ENCODE measurements at regions of chr15 and their contacts with region 1.

Region 1: DNA sequence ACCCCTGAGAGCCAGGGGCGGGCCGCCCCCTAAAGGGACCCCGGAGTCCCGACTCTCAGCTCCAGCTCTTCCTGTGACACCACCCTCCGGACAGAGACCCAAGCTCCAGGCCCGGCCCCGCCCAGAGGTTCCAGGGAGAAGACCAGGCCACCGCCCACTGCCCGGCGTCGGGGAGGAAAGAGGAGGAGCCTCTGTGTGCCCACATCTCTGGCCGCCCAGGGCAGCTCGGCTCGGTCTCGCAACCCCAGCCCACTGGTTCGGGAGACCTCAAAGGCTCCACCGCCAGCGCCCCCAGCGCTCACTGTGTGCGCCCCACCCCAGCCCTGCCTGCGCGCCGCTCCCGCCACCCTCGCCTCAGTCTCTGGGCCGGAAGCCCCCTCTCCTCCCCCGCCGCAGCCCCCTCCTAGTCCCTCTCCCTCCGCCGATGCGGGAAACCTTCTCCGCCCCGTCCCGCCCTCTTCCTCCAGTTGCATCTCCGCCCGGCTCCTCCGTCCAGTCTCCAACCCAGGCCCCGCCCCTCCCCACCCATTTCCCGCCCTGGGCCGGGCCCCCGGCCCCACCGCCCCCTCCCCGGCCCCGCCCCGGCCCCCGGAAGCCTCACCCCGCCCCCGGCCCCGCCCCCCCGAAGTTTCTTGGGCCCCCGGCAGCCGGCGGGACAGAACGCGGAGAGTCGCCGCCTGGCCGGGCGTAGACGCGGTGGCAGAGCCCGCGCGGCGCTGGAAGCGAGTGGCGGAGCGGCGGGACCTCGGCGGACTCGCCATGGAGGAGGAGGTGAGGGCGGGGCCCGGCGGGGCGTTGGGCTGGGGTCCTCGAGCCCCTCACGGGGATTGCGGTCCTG is at the start of gene PLEKHO2:
- DNase-seq: peak; percentile 89 to 90
- ATAC-seq: peak; percentile 84 to 85
- H3K4me3 ChIP-seq: peak within 1 kb of the TSS; percentile 66 to 92 (median 80)
- H3K27ac ChIP-seq: peak within 1 kb of the TSS; percentile 84 to 95 (median 89)
- H3K4me1 ChIP-seq: peaks cover 8 to 25% of the 10 kb centered on the region in 2 donors
- H3K27me3 ChIP-seq: no peaks in the 10 kb centered on the region
- CTCF ChIP-seq: no peak
- POLR2A ChIP-seq: peak; percentile 61 to 79
- total RNA-seq, gene PLEKHO2: 2.0 to 5.4 (median 3.3) TPM

Region 2: GRCh38 chr15:64893481-64894394 is 52.3 kb after region 1 on chr15:
- in situ Hi-C with region 1: loop called in 1 of 4 experiments (anchors 10 kb)
- intact Hi-C with region 1: loop called (anchors 5 kb)
- DNase-seq: peak; percentile 77 to 86
- ATAC-seq: peak; percentile 81 to 84
- H3K4me3 ChIP-seq: peak overlapping the region; percentile 40 to 50 (median 48)
- H3K27ac ChIP-seq: peak overlapping the region; percentile 64 to 80 (median 77)
- H3K4me1 ChIP-seq: peaks cover 38 to 42% of the 10 kb centered on the region in 2 donors
- H3K27me3 ChIP-seq: no peaks in the 10 kb centered on the region
- CTCF ChIP-seq: no peak
- POLR2A ChIP-seq: peak; percentile 32 to 50

Region 3: DNA sequence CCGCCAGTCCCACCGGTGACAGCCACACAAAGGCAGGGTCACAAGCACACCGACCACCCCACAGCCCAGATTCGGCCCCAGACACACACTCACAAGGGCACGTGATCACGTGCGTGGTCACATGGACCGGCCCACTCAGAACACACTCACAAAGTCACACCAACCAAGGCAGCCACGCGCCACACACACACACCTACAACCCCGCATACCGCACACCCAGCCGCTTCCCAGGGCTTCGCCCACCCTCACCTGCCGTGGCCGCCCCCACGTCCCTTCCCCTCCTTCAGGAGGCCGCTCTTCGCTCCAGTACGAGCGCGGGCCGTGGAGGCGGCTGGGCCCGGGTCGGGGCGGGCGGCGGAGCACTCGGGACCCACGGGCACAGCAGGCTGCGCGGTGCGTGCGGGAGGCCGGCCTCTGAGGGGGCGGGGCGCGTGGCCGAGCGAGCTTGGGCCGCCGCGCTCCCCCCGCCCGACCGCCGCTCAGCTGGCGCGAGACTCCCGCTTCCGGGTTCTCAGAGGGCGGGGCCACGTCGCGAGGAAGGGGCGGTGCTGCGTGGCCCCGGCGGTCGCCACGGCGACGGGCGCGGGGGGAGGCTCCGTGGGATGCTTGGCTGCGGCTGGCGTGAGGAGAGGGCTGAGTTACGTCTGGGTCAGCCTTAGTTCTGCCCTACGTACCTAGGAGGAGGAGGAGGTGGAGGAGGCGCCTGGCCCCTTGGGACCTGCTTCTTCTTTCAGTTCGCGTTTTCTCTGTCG is 148.1 kb after region 1 on chr15 and contains the start of gene SPG21:
- in situ Hi-C with region 1: no loop called
- intact Hi-C with region 1: loop called (anchors 5 kb)
- DNase-seq: peak; percentile 76 to 82
- ATAC-seq: peak; percentile 89 to 90
- H3K4me3 ChIP-seq: peak within 1 kb of the TSS; percentile 79 to 100 (median 98)
- H3K27ac ChIP-seq: peak within 1 kb of the TSS; percentile 91 to 99 (median 99)
- H3K4me1 ChIP-seq: peaks cover 8 to 22% of the 10 kb centered on the region in 2 donors
- H3K27me3 ChIP-seq: no peaks in the 10 kb centered on the region
- CTCF ChIP-seq: no peak
- POLR2A ChIP-seq: peak; percentile 73 to 81
- total RNA-seq, gene SPG21: 61.9 to 84.4 (median 72.5) TPM